A549 (cell line): ENCODE measurements at regions of chr9 and their contacts with region 1.

Region 1: DNA sequence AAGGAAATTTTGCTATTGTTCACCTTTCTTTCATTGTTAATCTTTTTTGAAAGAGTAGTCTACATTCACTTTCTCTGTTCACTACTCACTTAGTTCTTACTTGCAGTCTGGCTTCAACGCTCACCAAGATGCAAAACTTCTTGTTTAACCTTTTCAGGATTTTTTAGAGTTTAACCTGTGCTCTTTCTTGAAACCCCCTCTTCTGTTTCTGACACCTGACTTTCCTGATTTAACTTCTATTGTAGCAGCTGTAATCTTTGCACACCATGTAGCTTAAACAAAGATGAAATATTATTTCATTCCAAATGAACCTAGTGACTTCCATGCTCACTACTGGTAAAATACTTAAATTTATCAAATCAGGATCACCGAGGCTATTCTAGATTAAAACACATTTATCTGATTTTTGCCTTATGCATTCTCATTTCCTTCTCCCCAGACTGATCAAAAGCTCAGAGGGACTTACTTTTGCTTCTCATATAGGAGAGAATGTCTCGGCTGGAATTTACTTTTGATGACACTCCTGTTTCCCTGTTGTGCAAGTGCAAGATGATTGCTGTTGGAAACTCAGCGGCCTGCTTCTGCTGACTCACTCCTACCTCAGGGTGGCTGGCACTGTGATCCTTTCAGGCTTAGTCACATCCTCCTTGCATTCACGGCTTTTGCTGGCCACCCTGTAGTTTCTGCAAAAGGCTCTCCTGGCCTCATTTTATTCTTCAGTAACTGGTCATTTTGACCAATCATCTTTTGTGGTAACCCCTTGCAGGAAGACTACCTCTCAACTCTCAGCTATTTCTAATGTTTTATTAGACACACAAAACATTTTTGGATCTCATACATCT is 109.3 kb upstream of the IFNE start:
- DNase-seq: peak; percentile 74 to 99
- ATAC-seq: peak; percentile 94 to 99
- H3K4me3 ChIP-seq: peak overlapping the region; percentile 49
- H3K27ac ChIP-seq: peak overlapping the region; percentile 91 to 93
- H3K4me1 ChIP-seq: peaks cover 59% of the 10 kb centered on the region
- CTCF ChIP-seq: no peak
- EP300 ChIP-seq: peak; percentile 93 to 98
- POLR2A ChIP-seq: peak; percentile 38; the same call in 1 of the 2 replicates
- RAD21 ChIP-seq: peak; percentile 36 to 63

Region 2: DNA sequence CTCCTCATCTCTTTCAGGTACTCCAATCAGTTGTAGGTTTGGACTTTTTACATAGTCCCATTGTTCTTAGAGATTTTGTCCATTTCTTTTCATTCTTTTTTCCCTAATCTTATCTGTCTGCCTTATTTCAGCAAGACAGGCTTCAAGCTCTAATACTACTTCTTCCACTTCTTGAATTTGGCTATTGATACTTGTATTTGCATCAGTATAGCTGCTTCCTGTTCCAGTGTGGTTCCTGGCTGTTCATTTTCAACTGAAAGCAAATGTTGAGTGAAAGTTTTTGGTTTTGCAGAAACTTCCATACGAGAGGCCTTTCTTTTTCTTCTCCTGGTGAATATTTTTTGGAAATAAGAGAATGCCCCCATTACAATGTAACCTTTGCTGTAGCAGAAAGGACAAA is 163.2 kb before region 1 on chr9:
- CTCF ChIA-PET with region 1: no interaction called
- POLR2A ChIA-PET with region 1: no interaction called
- DNase-seq: no peak
- ATAC-seq: no peak
- H3K4me3 ChIP-seq: no peak overlapping the region
- H3K27ac ChIP-seq: no peak overlapping the region
- H3K4me1 ChIP-seq: no peaks in the 10 kb centered on the region
- CTCF ChIP-seq: no peak
- EP300 ChIP-seq: no peak
- POLR2A ChIP-seq: no peak
- RAD21 ChIP-seq: no peak

Region 3: GRCh38 chr9:21559424-21560280 is 31.8 kb before region 1 on chr9:
- CTCF ChIA-PET with region 1: interaction called, 6 read pairs
- POLR2A ChIA-PET with region 1: interaction called, 15 read pairs
- DNase-seq: peak; percentile 37 to 83
- ATAC-seq: peak; percentile 84 to 85
- H3K4me3 ChIP-seq: peak overlapping the region; percentile 79
- H3K27ac ChIP-seq: peak overlapping the region; percentile 94 to 98
- H3K4me1 ChIP-seq: peaks cover 13% of the 10 kb centered on the region; the same call in 2 of the 3 replicates
- CTCF ChIP-seq: no peak
- EP300 ChIP-seq: no peak; a peak in 1 of 5 replicates
- POLR2A ChIP-seq: peak; percentile 52
- RAD21 ChIP-seq: no peak; a peak in 1 of 5 replicates

Region 4: GRCh38 chr9:21576331-21577189 is 14.9 kb before region 1 on chr9:
- CTCF ChIA-PET with region 1: interaction called, 7 read pairs
- POLR2A ChIA-PET with region 1: interaction called, 21 read pairs
- DNase-seq: peak in 1 of 2 experiments; percentile 80
- ATAC-seq: peak; percentile 70
- H3K4me3 ChIP-seq: peak overlapping the region; percentile 25; the same call in 2 of the 3 replicates
- H3K27ac ChIP-seq: peak overlapping the region; percentile 85 to 93
- H3K4me1 ChIP-seq: peaks cover 86% of the 10 kb centered on the region
- CTCF ChIP-seq: no peak
- EP300 ChIP-seq: peak; percentile 32 to 62; a peak in 2 of 5 replicates
- POLR2A ChIP-seq: no peak
- RAD21 ChIP-seq: peak in 1 of 2 experiments; percentile 1; a peak in 1 of 5 replicates

Region 5: DNA sequence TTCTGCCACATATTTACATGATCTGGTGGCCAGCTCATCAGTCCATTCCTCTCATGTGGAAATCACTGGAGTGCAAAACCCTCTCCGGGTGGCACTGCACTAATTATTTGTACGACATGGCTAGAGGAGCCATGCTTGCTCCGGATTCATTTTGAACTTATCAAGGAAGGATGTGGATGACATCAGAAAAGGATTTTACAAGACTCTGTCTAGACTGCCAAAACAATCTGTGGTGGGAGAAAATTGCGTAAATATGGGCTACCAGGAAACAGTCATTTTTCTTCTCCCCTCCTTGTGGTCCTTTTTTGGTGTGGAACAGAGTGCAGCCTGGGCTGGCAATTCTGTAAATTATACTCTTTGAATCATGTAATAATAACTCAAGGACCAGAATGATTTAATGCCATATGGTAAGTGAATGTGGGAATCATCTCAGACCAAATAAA is 14.1 kb after region 1 on chr9:
- CTCF ChIA-PET with region 1: interaction called, 3 read pairs
- POLR2A ChIA-PET with region 1: interaction called, 18 read pairs
- DNase-seq: peak; percentile 38 to 89
- ATAC-seq: peak; percentile 72 to 86
- H3K4me3 ChIP-seq: peak overlapping the region; percentile 27; the same call in 1 of the 3 replicates
- H3K27ac ChIP-seq: peak overlapping the region; percentile 90 to 93
- H3K4me1 ChIP-seq: peaks cover 74% of the 10 kb centered on the region
- CTCF ChIP-seq: no peak
- EP300 ChIP-seq: peak; percentile 76 to 94; a peak in 4 of 5 replicates
- POLR2A ChIP-seq: no peak
- RAD21 ChIP-seq: peak; percentile 17 to 37; a peak in 4 of 5 replicates

Region 6: DNA sequence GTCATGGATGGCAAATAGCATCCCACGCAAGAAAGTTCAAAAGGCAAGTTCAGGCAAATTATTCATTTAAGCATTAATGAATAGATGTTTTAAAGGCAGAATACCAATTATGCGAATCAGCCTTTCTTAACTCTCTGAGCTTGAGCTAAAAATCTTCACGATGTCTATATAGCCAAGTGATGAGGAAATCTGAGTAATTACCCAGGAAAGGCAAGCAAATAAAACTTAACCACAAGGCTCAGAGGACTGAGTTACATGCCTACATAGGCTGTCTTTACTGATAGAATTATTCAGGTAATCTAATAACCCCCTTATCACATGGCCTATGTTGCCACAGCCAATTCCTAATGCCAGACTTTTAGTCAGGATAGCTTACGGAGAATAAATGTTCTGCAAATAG is 90.2 kb after region 1 on chr9:
- CTCF ChIA-PET with region 1: interaction called, 3 read pairs
- POLR2A ChIA-PET with region 1: interaction called, 61 read pairs
- DNase-seq: peak in 1 of 2 experiments; percentile 81
- ATAC-seq: peak; percentile 7 to 27; a peak in 3 of 6 replicates
- H3K4me3 ChIP-seq: peak overlapping the region; percentile 13; the same call in 2 of the 3 replicates
- H3K27ac ChIP-seq: peak overlapping the region; percentile 92 to 94
- H3K4me1 ChIP-seq: peaks cover 92% of the 10 kb centered on the region
- CTCF ChIP-seq: no peak
- EP300 ChIP-seq: peak in 1 of 2 experiments; percentile 70; a peak in 2 of 5 replicates
- POLR2A ChIP-seq: no peak
- RAD21 ChIP-seq: no peak

Region 7: DNA sequence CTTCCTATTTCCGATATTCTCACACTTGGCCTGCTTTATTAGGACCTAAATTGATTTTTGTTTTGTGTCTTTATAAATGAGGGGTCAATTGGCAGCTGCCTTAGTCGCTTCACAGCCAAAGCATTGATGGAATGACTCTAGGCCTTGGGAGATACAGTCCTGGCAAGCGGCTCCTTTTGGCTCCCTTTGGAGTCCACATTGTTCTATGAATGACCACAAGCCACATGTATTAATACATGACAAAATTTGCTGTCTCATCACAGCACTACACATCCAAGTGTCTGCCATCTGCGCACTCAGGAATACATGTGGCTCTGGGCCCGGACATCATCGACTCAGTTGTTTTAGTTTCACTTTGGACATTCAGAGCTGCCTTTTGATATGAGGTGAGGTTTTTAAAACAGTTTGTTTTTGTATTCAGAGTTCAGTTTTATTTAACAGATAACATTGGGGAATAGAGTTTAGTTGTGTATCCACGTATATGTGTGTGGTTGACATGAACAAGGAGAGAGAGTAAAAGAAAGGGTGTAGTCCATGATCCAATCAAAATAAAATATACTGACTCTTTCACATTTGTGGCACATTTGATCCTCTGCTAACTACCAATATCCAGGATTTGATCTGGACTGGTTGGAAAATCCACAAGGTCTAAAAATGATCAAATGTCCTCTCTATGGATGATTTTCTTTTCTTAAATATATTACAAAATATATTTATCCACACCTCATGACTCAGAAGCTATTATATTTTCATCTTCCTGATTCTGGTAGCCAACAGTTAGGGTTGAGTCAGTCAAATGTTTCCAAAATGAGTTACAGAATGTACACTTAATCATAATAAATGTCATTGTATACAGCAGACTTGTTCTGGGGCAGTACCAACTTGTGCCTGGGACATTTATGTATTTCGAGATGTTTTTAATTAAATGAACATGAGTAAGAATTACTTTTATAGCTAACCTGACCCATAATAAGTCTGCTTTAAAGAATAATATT is 97.0 kb after region 1 on chr9:
- CTCF ChIA-PET with region 1: interaction called, 3 read pairs
- POLR2A ChIA-PET with region 1: interaction called, 61 read pairs
- DNase-seq: peak; percentile 51 to 87
- ATAC-seq: peak; percentile 51 to 66; a peak in 5 of 6 replicates
- H3K4me3 ChIP-seq: peak overlapping the region; percentile 31
- H3K27ac ChIP-seq: peak overlapping the region; percentile 92 to 94
- H3K4me1 ChIP-seq: peaks cover 67% of the 10 kb centered on the region
- CTCF ChIP-seq: no peak
- EP300 ChIP-seq: no peak
- POLR2A ChIP-seq: no peak
- RAD21 ChIP-seq: no peak

Region 8: GRCh38 chr9:21802195-21803000 is 211.0 kb after region 1 on chr9 and contains the start of gene MTAP:
- CTCF ChIA-PET with region 1: no interaction called
- POLR2A ChIA-PET with region 1: interaction called, 13 read pairs
- DNase-seq: peak; percentile 89 to 94
- ATAC-seq: peak; percentile 97 to 98
- H3K4me3 ChIP-seq: peak within 1 kb of the TSS; percentile 69
- H3K27ac ChIP-seq: peak within 1 kb of the TSS; percentile 87 to 95
- H3K4me1 ChIP-seq: peaks cover 41% of the 10 kb centered on the region
- CTCF ChIP-seq: no peak
- EP300 ChIP-seq: no peak
- POLR2A ChIP-seq: peak; percentile 97
- RAD21 ChIP-seq: peak in 1 of 2 experiments; percentile 9; a peak in 1 of 5 replicates
- polyA plus RNA-seq, gene MTAP: 2.4 and 4.1 TPM in 2 replicates